HEK293T (cell line): ENCODE measurements at regions of chr11 and their contacts with region 1.

Region 1: GRCh38 chr11:17384002-17384511 is 4.4 kb downstream of the KCNJ11 start:
- DNase-seq: peak; percentile 72

Region 2: GRCh38 chr11:17400048-17400775 is 16.2 kb after region 1 on chr11:
- CTCF ChIA-PET with region 1: no interaction called
- POLR2A ChIA-PET with region 1: no interaction called
- DNase-seq: no peak

Region 3: DNA sequence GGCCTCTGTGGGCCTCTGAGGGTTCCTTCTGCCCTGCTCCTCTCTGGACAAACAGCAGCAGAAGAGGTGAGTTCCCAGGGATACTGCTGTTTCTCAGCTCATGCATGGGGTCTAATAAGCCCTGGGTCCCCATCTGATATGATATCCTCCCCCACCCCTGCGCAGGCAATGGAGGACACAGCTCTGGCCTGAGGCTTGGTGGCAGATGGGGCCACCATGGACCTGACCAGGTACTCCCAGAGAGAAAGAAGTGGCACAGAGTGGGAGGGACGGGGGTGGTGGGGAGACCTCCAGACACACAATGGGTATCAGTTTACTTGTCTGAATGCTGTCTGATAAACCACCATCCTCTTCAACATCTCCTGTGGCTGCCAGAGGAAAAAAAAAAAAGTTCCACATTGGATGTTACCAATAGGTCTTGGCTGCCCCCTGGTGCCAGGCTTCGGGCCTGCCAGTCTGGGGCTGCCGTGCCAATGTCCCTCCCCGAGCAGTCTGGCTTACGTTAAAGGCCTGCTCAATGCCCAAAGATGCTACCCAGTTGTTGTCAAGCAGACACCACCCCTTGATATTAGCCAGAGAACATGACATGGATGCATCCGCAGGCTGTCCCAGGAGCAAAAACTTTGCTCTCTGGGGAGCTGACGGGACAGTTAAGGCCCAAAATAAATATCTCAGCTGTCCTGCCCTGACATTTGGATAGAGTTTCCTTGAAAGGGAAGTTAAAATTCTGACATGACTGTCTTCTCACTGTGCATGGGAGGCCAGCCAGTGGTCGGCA is 120.5 kb after region 1 on chr11:
- CTCF ChIA-PET with region 1: interaction called, 39 read pairs
- POLR2A ChIA-PET with region 1: interaction called, 3 read pairs
- DNase-seq: peak; percentile 80